Activated CD4-positive, alpha-beta memory T cell treated with anti-CD3 and anti-CD28 coated beads, Interleukin-2, amount 10 ng/mL, durations not matched to agents 7 days and 5 days (primary cell): ENCODE measurements at regions of chr4 and their contacts with region 1.

Region 1: DNA sequence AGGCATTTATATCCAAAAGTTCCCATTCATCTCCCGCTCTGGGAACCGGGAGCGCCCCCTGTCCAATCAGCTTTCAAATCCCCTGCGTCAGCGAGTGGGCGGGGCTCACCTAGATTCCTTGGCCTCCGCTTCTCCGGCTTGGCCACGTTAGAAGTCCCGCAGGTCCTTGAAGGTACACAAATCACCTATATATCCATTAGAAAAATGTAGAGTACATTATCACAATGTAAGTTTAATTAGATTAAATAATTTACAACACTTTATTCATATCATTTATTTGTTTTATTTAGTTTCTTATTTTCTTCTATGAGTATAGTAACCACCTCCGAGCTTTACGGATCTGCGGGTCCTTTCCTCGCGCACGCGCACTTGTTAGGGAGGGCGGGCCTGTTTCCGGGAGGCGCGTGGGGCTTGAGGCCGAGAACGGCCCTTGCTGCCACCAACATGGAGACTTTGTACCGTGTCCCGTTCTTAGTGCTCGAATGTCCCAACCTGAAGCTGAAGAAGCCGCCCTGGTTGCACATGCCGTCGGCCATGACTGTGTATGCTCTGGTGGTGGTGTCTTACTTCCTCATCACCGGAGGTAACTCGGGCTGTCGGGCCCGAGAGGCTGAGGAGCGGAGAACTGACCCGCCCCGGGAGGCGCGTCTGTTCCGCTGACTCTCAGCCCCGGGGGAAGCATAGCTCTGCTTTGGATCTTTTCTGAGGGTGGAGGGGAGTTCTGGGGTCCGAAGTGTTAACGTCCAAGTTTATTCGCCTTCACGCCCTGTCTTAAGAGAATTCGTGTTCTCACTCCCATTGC is at the start of gene OSTC:
- DNase-seq: peak; percentile 91
- H3K4me3 Mint-ChIP-seq: peak within 1 kb of the TSS; percentile 92
- H3K27ac Mint-ChIP-seq: peak within 1 kb of the TSS; percentile 82
- H3K4me1 Mint-ChIP-seq: peaks cover 39% of the 10 kb centered on the region
- H3K27me3 Mint-ChIP-seq: no peaks in the 10 kb centered on the region
- total RNA-seq, gene OSTC: 81.4 to 85.1 TPM

Region 2: DNA sequence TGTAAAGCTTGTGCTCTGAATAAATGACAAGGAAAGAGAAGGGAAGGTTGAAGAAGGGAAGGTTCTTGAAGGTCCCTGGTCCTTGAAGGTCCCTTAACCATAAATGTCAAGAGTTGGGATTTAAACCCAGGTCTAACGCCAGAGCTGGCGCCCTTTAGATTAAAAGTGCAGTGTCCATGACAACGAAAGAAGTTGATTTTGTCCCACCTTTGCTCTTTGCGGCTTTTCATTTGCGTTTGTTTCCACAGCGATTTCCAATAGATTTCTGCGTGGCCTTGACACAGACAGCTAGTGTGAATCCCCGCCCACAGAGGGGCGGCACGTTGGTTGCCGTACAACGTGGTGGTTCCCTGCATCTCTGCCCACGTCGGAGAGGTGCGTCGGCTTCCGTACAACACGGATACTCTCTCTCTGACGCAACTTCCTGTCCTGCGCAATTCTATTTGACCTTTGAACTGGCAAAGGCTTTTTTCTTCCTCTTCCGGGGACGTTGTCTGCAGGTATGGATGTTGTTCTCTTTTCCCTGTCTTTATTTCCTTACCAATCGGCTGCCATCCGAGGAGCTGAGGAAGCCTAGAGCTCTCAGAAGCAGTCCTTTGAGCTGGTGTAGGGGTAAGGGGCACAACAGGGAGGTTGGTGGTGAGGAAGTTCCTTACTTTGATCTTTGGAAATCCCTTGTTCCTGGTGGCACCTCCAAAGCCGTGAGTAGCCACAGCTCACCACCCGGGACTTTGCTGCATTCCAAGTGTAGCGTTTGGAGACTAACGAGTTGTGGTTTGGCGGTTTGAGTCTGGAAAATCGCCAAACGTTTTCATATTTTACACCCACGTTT is 30.1 kb before region 1 on chr4 and contains the start of gene RPL34:
- CTCF ChIA-PET with region 1: interaction called, 7 read pairs
- POLR2A ChIA-PET with region 1: interaction called, 41 read pairs
- DNase-seq: peak; percentile 96
- H3K4me3 Mint-ChIP-seq: peak within 1 kb of the TSS; percentile 82
- H3K27ac Mint-ChIP-seq: peak within 1 kb of the TSS; percentile 87
- H3K4me1 Mint-ChIP-seq: peaks cover 54% of the 10 kb centered on the region
- H3K27me3 Mint-ChIP-seq: no peaks in the 10 kb centered on the region
- total RNA-seq, gene RPL34: 1,156 to 1,199 TPM

Region 3: GRCh38 chr4:108628411-108628810 is 22.0 kb before region 1 on chr4:
- CTCF ChIA-PET with region 1: interaction called, 4 read pairs
- POLR2A ChIA-PET with region 1: interaction called, 24 read pairs
- DNase-seq: no peak
- H3K4me3 Mint-ChIP-seq: no peak overlapping the region
- H3K27ac Mint-ChIP-seq: no peak overlapping the region
- H3K4me1 Mint-ChIP-seq: peaks cover 20% of the 10 kb centered on the region
- H3K27me3 Mint-ChIP-seq: no peaks in the 10 kb centered on the region